Natural killer cell (primary cell): ENCODE measurements at regions of chr2 and their contacts with region 1.

Region 1: DNA sequence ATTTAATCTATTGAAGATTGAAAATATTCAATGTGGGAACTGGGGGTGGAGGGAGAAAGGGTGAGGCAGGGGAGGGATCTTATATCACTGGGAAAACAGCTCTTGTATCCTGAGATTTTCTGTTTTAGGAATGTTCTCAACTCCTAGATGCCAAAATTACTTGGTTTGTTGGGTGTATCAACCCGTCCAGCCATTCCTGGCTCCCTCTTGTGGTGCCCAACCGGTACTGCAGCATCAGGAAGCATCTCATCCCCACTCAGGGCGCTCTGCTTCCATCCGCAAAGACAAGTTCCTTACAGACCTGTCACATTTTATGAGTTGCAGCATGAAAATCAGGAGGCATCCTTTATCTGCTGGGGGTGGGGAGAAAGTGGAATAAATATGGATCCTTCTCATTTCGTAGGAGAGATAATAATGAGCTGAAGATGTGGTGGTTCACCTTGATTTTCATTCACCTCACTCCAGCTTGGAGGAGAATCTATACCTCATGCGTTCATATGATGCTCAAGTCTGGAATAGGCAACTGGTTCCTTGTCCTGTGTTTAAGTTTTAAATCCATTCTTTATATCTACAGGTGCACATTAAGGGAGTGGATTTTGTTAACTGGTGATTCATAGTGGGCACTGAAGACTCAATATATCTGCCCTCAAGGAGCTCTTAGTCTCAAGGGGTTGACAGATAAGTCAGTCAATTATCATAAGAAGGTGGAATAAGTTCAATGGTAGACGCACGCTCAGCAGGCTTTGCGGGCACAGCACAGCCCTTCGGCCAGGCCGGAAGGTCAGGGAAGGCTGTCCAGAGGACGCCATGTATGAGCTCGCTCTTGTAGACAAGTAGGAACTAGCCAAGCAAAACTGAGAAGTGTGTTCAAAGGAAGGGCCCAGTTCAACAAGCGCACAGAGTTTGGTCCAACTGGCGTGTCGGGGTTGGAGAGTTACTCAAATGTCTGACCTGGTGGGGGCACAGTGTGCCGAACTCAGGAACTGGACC is 127.3 kb downstream of the RNF144A start:
- DNase-seq: peak; percentile 52 to 83
- ATAC-seq: peak; percentile 77 to 88 (median 85)
- H3K4me3 ChIP-seq: no peak overlapping the region
- H3K4me3 Mint-ChIP-seq: no peak overlapping the region
- H3K27ac ChIP-seq: no peak overlapping the region
- H3K27ac Mint-ChIP-seq: no peak overlapping the region
- H3K4me1 ChIP-seq: peaks cover 6% of the 10 kb centered on the region
- H3K4me1 Mint-ChIP-seq: peaks cover 6 to 10% of the 10 kb centered on the region in 2 donors
- H3K27me3 ChIP-seq: no peaks in the 10 kb centered on the region
- H3K27me3 Mint-ChIP-seq: no peaks in the 10 kb centered on the region
- CTCF ChIP-seq: peak; percentile 98

Region 2: GRCh38 chr2:6826081-6826913 is 218.3 kb before region 1 on chr2:
- intact Hi-C with region 1: loop called (anchors 1 kb)
- DNase-seq: peak; percentile 23 to 77
- ATAC-seq: peak; percentile 85 to 88 (median 87)
- H3K4me3 ChIP-seq: no peak overlapping the region
- H3K4me3 Mint-ChIP-seq: no peak overlapping the region
- H3K27ac ChIP-seq: no peak overlapping the region
- H3K27ac Mint-ChIP-seq: no peak overlapping the region
- H3K4me1 ChIP-seq: no peaks in the 10 kb centered on the region
- H3K4me1 Mint-ChIP-seq: peaks cover 6 to 12% of the 10 kb centered on the region in 2 donors
- H3K27me3 ChIP-seq: no peaks in the 10 kb centered on the region
- H3K27me3 Mint-ChIP-seq: no peaks in the 10 kb centered on the region
- CTCF ChIP-seq: peak; percentile 80

Region 3: GRCh38 chr2:6896930-6897759 is 147.4 kb before region 1 on chr2:
- intact Hi-C with region 1: loop called (anchors 1 kb)
- DNase-seq: peak in 1 of 2 donors; percentile 74
- ATAC-seq: peak in 2 of 3 donors; percentile 63 to 64
- H3K4me3 ChIP-seq: no peak overlapping the region
- H3K4me3 Mint-ChIP-seq: no peak overlapping the region
- H3K27ac ChIP-seq: no peak overlapping the region
- H3K27ac Mint-ChIP-seq: no peak overlapping the region
- H3K4me1 ChIP-seq: no peaks in the 10 kb centered on the region
- H3K4me1 Mint-ChIP-seq: peaks cover 4 to 5% of the 10 kb centered on the region in 2 donors
- H3K27me3 ChIP-seq: no peaks in the 10 kb centered on the region
- H3K27me3 Mint-ChIP-seq: no peaks in the 10 kb centered on the region
- CTCF ChIP-seq: peak; percentile 75

Region 4: DNA sequence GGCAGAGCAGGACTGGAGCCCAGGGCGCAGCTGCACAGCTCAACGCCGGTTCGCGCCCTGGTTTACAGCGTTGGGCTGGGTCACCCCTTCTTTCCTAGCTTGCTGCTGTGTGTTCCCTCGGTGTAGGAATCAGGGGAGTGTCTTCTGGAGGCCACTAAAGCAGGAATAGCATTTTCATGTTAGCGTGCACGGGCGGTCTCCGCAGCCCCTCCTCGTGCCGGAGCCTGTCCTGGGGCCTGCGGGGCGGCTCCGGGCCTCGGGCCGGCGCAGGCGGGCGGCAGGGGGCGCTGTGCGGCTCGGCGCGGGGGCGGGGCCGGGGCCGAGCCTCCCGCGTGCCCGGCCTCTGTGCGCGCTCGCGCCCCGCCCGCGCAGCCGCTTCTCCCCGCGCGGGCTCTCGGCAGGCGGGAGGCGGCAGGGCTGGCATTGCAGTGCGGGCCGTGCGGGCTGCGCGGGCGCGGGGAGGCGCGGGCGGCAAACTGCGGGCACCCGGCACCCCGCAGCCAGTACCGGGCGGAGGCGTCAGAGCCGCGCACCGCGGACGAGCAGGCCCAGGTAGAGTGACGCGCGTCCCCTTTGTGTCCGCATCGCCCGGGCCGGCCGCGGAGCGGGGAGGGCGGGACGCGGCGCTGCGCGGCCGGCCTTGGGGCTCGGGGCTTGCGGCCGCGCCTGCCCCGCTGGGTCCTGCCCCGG is 127.3 kb before region 1 on chr2 and contains the start of gene RNF144A:
- intact Hi-C with region 1: no loop called
- DNase-seq: peak; percentile 80 to 88
- ATAC-seq: peak; percentile 92 to 98 (median 95)
- H3K4me3 ChIP-seq: peak within 1 kb of the TSS; percentile 56
- H3K4me3 Mint-ChIP-seq: peak within 1 kb of the TSS; percentile 82
- H3K27ac ChIP-seq: no peak within 1 kb of the TSS
- H3K27ac Mint-ChIP-seq: peak within 1 kb of the TSS in 1 of 2 donors; percentile 64
- H3K4me1 ChIP-seq: peaks cover 34% of the 10 kb centered on the region
- H3K4me1 Mint-ChIP-seq: peaks cover 33 to 64% of the 10 kb centered on the region in 2 donors
- H3K27me3 ChIP-seq: no peaks in the 10 kb centered on the region
- H3K27me3 Mint-ChIP-seq: peaks cover 6 to 7% of the 10 kb centered on the region in 2 donors
- CTCF ChIP-seq: peak; percentile 51
- total RNA-seq, gene RNF144A: 17.3 to 36.7 (median 19.0) TPM